Dendritic cell treated with granulocyte-macrophage colony-stimulating factor and Interleukin-4, amounts not matched to agents 40 ng/mL and 50 ng/mL, for 4 days (primary cell): ENCODE measurements at regions of chr1 and their contacts with region 1.

Region 1: GRCh38 chr1:24526940-24527542 is 24.4 kb downstream of the RCAN3 start:
- H3K4me3 Mint-ChIP-seq: no peak overlapping the region
- H3K27ac Mint-ChIP-seq: no peak overlapping the region
- H3K4me1 Mint-ChIP-seq: no peaks in the 10 kb centered on the region
- H3K27me3 Mint-ChIP-seq: no peaks in the 10 kb centered on the region

Region 2: DNA sequence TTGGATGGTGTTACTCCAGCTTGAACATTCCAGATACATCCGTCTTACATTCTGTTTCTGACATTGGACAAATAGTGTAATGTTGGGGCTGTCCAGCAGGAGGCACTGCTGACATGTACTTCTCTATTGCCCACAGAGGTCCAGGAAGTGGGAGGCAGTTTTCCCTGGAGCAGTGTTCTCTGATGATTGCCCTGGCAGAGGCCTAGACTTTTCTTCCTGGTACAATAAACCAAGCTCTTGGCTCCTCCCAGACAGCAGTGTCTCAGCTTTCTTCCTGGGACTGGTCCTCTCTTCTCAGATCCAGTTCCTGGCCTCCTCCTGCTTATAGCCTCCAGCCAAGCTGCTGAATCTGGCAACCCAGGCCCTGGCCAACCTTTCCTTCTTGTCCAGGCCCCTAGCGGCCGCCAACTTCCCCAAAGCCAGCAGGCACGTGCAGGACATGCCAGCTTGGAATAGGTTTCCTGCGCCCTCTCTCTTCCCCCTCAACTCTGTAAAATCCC is 325.1 kb before region 1 on chr1:
- intact Hi-C with region 1: loop called (anchors 5 kb)
- H3K4me3 Mint-ChIP-seq: no peak overlapping the region
- H3K27ac Mint-ChIP-seq: no peak overlapping the region
- H3K4me1 Mint-ChIP-seq: peaks cover 13% of the 10 kb centered on the region
- H3K27me3 Mint-ChIP-seq: peaks cover 21% of the 10 kb centered on the region

Region 3: GRCh38 chr1:24403806-24404205 is 123.2 kb before region 1 on chr1:
- intact Hi-C with region 1: no loop called
- H3K4me3 Mint-ChIP-seq: no peak overlapping the region
- H3K27ac Mint-ChIP-seq: no peak overlapping the region
- H3K4me1 Mint-ChIP-seq: no peaks in the 10 kb centered on the region
- H3K27me3 Mint-ChIP-seq: no peaks in the 10 kb centered on the region

Region 4: GRCh38 chr1:24443241-24443656 is 83.8 kb before region 1 on chr1:
- intact Hi-C with region 1: loop called (anchors 10 kb)
- H3K4me3 Mint-ChIP-seq: no peak overlapping the region
- H3K27ac Mint-ChIP-seq: no peak overlapping the region
- H3K4me1 Mint-ChIP-seq: no peaks in the 10 kb centered on the region
- H3K27me3 Mint-ChIP-seq: no peaks in the 10 kb centered on the region